Activated CD4-positive, alpha-beta memory T cell treated with anti-CD3 and anti-CD28 coated beads, Interleukin-2, amount 10 ng/mL, durations not matched to agents 7 days and 5 days (primary cell): ENCODE measurements at regions of chr3 and their contacts with region 1.

Region 1: GRCh38 chr3:111978493-111979433 is at the start of gene ABHD10:
- DNase-seq: peak; percentile 97
- H3K4me3 Mint-ChIP-seq: peak within 1 kb of the TSS; percentile 75
- H3K27ac Mint-ChIP-seq: peak within 1 kb of the TSS; percentile 92
- H3K4me1 Mint-ChIP-seq: peaks cover 42% of the 10 kb centered on the region
- H3K27me3 Mint-ChIP-seq: no peaks in the 10 kb centered on the region
- total RNA-seq, gene ABHD10: 40.4 to 44.7 TPM

Region 2: GRCh38 chr3:111700054-111700453 is 278.7 kb before region 1 on chr3:
- CTCF ChIA-PET with region 1: interaction called, 4 read pairs
- POLR2A ChIA-PET with region 1: interaction called, 13 read pairs
- DNase-seq: no peak
- H3K4me3 Mint-ChIP-seq: peak overlapping the region; percentile 35
- H3K27ac Mint-ChIP-seq: peak overlapping the region; percentile 64
- H3K4me1 Mint-ChIP-seq: peaks cover 23% of the 10 kb centered on the region
- H3K27me3 Mint-ChIP-seq: no peaks in the 10 kb centered on the region

Region 3: GRCh38 chr3:111801686-111802085 is 177.1 kb before region 1 on chr3:
- CTCF ChIA-PET with region 1: no interaction called
- POLR2A ChIA-PET with region 1: no interaction called
- DNase-seq: no peak
- H3K4me3 Mint-ChIP-seq: no peak overlapping the region
- H3K27ac Mint-ChIP-seq: no peak overlapping the region
- H3K4me1 Mint-ChIP-seq: no peaks in the 10 kb centered on the region
- H3K27me3 Mint-ChIP-seq: no peaks in the 10 kb centered on the region

Region 4: GRCh38 chr3:111859974-111860859 is 118.5 kb before region 1 on chr3:
- CTCF ChIA-PET with region 1: interaction called, 11 read pairs
- POLR2A ChIA-PET with region 1: interaction called, 20 read pairs
- DNase-seq: peak; percentile 72
- H3K4me3 Mint-ChIP-seq: peak overlapping the region; percentile 87
- H3K27ac Mint-ChIP-seq: peak overlapping the region; percentile 61
- H3K4me1 Mint-ChIP-seq: peaks cover 18% of the 10 kb centered on the region
- H3K27me3 Mint-ChIP-seq: peaks cover 38% of the 10 kb centered on the region

Region 5: DNA sequence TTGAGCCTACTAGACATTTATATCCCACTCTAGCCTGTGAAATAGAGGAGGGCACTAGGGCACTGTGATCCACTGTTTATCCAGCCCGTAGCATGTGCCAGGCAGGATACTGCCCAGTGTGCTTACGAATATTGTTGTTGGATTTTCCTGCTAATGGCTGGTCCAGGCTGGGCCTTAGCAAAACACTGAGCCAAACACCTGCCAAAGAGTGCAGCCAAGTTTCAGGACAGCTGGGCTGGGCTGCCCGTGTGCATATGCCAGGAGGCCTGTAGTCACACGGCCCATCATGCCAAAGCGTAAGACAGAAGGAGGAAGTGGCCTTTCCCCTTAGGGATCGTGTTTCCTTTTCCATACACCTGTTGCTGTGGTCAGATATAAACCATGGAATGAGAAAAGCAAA is 54.5 kb before region 1 on chr3:
- CTCF ChIA-PET with region 1: no interaction called
- POLR2A ChIA-PET with region 1: no interaction called
- DNase-seq: no peak
- H3K4me3 Mint-ChIP-seq: no peak overlapping the region
- H3K27ac Mint-ChIP-seq: no peak overlapping the region
- H3K4me1 Mint-ChIP-seq: peaks cover 4% of the 10 kb centered on the region
- H3K27me3 Mint-ChIP-seq: no peaks in the 10 kb centered on the region

Region 6: GRCh38 chr3:111989061-111989678 is 10.4 kb after region 1 on chr3:
- CTCF ChIA-PET with region 1: interaction called, 39 read pairs
- POLR2A ChIA-PET with region 1: interaction called, 28 read pairs
- DNase-seq: no peak
- H3K4me3 Mint-ChIP-seq: no peak overlapping the region
- H3K27ac Mint-ChIP-seq: no peak overlapping the region
- H3K4me1 Mint-ChIP-seq: peaks cover 31% of the 10 kb centered on the region
- H3K27me3 Mint-ChIP-seq: no peaks in the 10 kb centered on the region

Region 7: GRCh38 chr3:112013058-112013783 is 34.5 kb after region 1 on chr3:
- CTCF ChIA-PET with region 1: interaction called, 24 read pairs
- POLR2A ChIA-PET with region 1: interaction called, 12 read pairs
- DNase-seq: peak; percentile 75
- H3K4me3 Mint-ChIP-seq: no peak overlapping the region
- H3K27ac Mint-ChIP-seq: no peak overlapping the region
- H3K4me1 Mint-ChIP-seq: peaks cover 17% of the 10 kb centered on the region
- H3K27me3 Mint-ChIP-seq: no peaks in the 10 kb centered on the region

Region 8: GRCh38 chr3:112289011-112289410 is 310.2 kb after region 1 on chr3:
- CTCF ChIA-PET with region 1: no interaction called
- POLR2A ChIA-PET with region 1: no interaction called
- DNase-seq: no peak
- H3K4me3 Mint-ChIP-seq: no peak overlapping the region
- H3K27ac Mint-ChIP-seq: no peak overlapping the region
- H3K4me1 Mint-ChIP-seq: peaks cover 8% of the 10 kb centered on the region
- H3K27me3 Mint-ChIP-seq: no peaks in the 10 kb centered on the region